ENCODE measurements at regions of chr6 and their contacts with region 1.

Region 1: DNA sequence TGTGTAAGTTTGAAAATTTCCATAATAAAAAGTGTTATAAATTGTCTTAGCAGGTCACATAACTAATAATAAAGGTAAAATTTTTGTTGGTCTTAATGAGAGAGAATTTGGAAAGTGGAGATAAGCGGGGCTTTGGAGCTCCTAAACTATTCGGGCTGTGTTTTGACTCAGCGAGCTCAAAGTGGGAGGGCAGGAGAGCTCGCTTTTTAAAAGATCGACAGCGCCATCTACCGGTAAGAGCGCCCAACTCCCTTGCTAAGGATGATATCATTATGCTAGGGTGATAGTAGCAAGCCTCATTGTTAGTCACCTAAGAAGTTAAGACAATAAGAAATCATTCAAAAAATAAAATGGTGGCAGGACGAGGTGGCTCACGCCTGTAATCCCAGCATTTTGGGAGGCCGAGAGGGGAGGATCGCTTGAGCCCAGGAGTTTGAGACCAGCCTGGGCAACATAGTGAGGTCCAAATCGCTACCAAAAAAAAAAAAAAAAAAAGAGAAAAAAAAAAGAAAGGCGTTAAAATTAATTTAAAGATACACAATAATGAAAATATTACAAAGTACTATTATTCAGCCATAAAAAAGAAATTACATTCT is 24.8 kb downstream of the C6orf15 start:
- H3K4me3 ChIP-seq: no peak overlapping the region
- H3K27ac ChIP-seq: no peak overlapping the region
- H3K4me1 ChIP-seq: peaks cover 10% of the 10 kb centered on the region; the same call in 1 of the 2 replicates
- CTCF ChIP-seq: peak; percentile 56

Region 2: DNA sequence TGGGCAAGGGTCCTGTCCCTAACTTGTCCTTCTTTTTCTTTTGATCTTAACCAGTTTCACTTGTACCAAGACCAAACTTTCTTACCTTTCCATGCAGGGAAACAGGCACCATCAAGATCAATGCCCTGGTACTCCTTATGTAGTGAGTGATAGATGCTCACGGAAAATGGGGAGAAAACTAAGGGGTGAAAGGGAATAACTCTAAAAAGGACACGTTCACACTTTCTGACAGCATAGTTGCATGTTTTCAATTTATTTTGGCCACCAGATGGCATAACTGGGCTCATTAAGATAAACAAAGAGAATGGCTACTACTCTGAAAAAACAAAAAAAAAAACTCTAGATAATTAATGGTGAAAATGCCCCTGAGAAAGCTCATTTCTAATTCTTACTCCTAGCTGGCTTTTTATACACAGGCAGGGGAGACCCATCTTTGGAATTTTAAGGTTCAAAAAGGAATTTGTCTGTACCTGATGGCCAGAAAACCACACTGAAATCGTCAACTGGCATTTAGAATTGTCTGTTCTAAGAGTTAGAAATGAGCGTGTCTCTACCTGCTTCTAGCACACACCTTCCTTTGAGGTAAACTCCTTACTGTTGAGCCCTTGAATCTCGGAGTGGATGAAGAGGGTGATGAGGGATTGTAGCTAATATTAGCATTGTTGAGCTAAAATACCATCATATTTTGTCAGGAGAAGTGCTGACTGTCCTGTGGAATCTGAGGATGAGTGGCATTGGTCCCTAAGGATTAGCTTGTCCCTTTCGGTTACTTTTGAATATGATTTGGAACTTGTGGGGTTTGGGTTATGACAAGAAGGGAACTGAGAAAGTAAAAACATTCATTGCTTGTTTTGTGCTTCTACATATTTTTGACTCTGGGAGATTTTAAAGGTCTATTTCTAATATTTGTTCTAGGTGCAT is 265.5 kb before region 1 on chr6:
- CTCF ChIA-PET with region 1: interaction called, 111 read pairs
- POLR2A ChIA-PET with region 1: no interaction called
- H3K4me3 ChIP-seq: no peak overlapping the region
- H3K27ac ChIP-seq: no peak overlapping the region
- H3K4me1 ChIP-seq: peaks cover 9% of the 10 kb centered on the region; the same call in 1 of the 2 replicates
- CTCF ChIP-seq: peak; percentile 53; the same call in 1 of the 2 replicates

Region 3: GRCh38 chr6:30877419-30878371 is 209.9 kb before region 1 on chr6:
- CTCF ChIA-PET with region 1: interaction called, 21 read pairs
- POLR2A ChIA-PET with region 1: interaction called, 3 read pairs
- H3K4me3 ChIP-seq: peak overlapping the region; percentile 20
- H3K27ac ChIP-seq: no peak overlapping the region; the same call in 1 of the 2 replicates
- H3K4me1 ChIP-seq: no peaks in the 10 kb centered on the region; the same call in 1 of the 2 replicates
- CTCF ChIP-seq: peak; percentile 89

Region 4: GRCh38 chr6:30914076-30914853 is 173.3 kb before region 1 on chr6 and contains the start of gene VARS2:
- CTCF ChIA-PET with region 1: interaction called, 206 read pairs
- POLR2A ChIA-PET with region 1: interaction called, 4 read pairs
- H3K4me3 ChIP-seq: peak within 1 kb of the TSS; percentile 45
- H3K27ac ChIP-seq: peak within 1 kb of the TSS; percentile 85
- H3K4me1 ChIP-seq: peaks cover 6% of the 10 kb centered on the region
- CTCF ChIP-seq: peak; percentile 70

Region 5: DNA sequence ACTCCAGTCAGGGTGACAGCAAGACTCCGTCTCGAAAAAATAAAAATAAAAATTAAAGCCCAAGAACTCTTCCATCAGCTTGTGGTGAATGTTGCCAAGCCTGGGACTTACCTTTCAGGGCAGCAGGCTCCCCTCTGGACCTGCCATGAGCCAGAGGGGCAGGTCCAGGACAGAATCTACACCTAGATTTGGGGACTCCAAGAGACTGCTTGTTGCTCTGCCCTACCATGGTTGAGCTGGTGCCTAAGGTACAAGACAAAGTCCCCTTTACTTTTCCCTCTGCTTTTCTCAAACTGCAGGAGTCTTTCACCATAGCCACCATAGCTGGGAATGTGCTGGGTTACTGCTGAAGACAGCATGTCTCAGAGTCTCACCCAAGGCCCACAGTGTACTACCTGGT is 15.5 kb after region 1 on chr6:
- CTCF ChIA-PET with region 1: interaction called, 20 read pairs
- POLR2A ChIA-PET with region 1: no interaction called
- H3K4me3 ChIP-seq: no peak overlapping the region
- H3K27ac ChIP-seq: no peak overlapping the region
- H3K4me1 ChIP-seq: no peaks in the 10 kb centered on the region
- CTCF ChIP-seq: no peak

Region 6: GRCh38 chr6:31128093-31128676 is 40.6 kb after region 1 on chr6:
- CTCF ChIA-PET with region 1: interaction called, 54 read pairs
- POLR2A ChIA-PET with region 1: no interaction called
- H3K4me3 ChIP-seq: no peak overlapping the region
- H3K27ac ChIP-seq: no peak overlapping the region
- H3K4me1 ChIP-seq: 0 out of 2 replicates have a peak, but pooled peaks cover 3% of the 10 kb centered on the region
- CTCF ChIP-seq: peak; percentile 57; the same call in 1 of the 2 replicates

Measured in HEK293 (cell line).